ENCODE measurements at regions of chr6 and their contacts with region 1.

Region 1: GRCh38 chr6:144365271-144365670 is 80.1 kb downstream of the UTRN start:
- DNase-seq: no peak
- H3K4me3 ChIP-seq: no peak overlapping the region
- H3K27ac ChIP-seq: no peak overlapping the region
- H3K4me1 ChIP-seq: peaks cover 0 to 6% of the 10 kb centered on the region in 2 donors
- H3K27me3 ChIP-seq: no peaks in the 10 kb centered on the region
- CTCF ChIP-seq: no peak
- POLR2A ChIP-seq: no peak

Region 2: GRCh38 chr6:144402750-144403149 is 37.5 kb after region 1 on chr6:
- intact Hi-C with region 1: loop called (anchors 2 kb)
- DNase-seq: no peak
- H3K4me3 ChIP-seq: no peak overlapping the region
- H3K27ac ChIP-seq: no peak overlapping the region
- H3K4me1 ChIP-seq: no peaks in the 10 kb centered on the region
- H3K27me3 ChIP-seq: no peaks in the 10 kb centered on the region
- CTCF ChIP-seq: no peak
- POLR2A ChIP-seq: no peak

Measured in breast epithelium (tissue), 4 donors.